MCF 10A (cell line): ENCODE measurements at regions of chr7 and their contacts with region 1.

Region 1: GRCh38 chr7:145398758-145399157 is 562.9 kb upstream of the TPK1 start:
- DNase-seq: peak; percentile 83
- H3K4me3 Mint-ChIP-seq: peak overlapping the region; percentile 48
- H3K27ac Mint-ChIP-seq: peak overlapping the region; percentile 66
- H3K4me1 Mint-ChIP-seq: peaks cover 39% of the 10 kb centered on the region
- H3K27me3 Mint-ChIP-seq: no peaks in the 10 kb centered on the region
- CTCF ChIP-seq: no peak

Region 2: DNA sequence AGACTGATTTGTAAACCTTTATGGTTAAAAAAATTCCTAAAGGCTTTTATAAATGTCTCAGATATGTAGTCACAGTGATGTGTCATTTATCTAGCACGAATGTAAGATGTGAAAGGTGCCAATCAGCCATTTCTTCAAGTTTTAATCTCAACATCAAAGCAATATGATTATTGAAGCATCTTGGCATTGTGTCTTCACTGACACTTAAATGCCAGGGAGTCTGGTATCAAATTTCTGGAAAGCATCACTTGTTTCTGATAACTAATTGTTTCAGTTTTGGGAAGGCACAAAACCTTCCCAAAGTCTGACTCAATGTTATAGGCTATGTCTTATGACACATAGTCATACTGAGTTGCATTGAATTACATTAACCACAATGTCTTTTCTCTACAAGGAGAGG is 225.9 kb after region 1 on chr7:
- CTCF ChIA-PET with region 1: no interaction called
- POLR2A ChIA-PET with region 1: no interaction called
- intact Hi-C with region 1: loop called (anchors 10 kb)
- DNase-seq: peak; percentile 27
- H3K4me3 Mint-ChIP-seq: no peak overlapping the region
- H3K27ac Mint-ChIP-seq: no peak overlapping the region
- H3K4me1 Mint-ChIP-seq: peaks cover 4% of the 10 kb centered on the region
- H3K27me3 Mint-ChIP-seq: peaks cover 21% of the 10 kb centered on the region
- CTCF ChIP-seq: no peak